Colonic mucosa (tissue), 4 donors: ENCODE measurements at regions of chr4 and their contacts with region 1.

Region 1: GRCh38 chr4:123640271-123640670 is 243.7 kb downstream of the SPRY1 start:
- DNase-seq: no peak
- H3K4me3 ChIP-seq: no peak overlapping the region
- H3K27ac ChIP-seq: no peak overlapping the region
- H3K4me1 ChIP-seq: no peaks in the 10 kb centered on the region
- H3K27me3 ChIP-seq: no peaks in the 10 kb centered on the region
- CTCF ChIP-seq: no peak

Region 2: DNA sequence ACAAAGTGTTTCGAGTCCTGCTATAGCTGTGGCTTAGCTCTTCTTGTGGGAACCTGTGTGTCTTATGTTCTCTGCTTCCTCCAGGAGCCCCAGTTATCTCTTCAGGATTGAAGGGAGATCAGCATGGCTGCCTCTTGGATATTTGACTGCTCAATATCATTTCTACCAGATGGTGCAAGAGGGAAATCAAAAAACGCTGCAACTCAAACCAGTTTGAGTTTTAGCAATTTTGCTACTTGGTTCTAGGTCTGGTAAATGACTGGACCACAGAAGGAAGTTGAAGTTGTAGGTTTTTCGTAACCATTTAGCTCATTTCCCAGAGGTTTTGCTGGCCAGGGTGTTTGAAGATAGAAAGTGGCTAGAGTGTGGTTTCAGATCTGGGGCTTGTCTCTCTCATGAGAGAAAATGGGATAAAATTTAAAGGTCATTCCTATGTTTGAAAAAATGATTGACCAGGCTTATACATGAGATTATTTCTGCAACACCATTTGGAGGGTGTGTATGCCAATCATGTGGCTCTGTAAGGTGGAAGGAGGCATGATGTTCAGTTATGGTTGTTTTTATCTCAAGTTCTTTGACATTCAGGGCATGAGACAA is 33.2 kb before region 1 on chr4:
- intact Hi-C with region 1: loop called (anchors 5 kb)
- DNase-seq: no peak
- H3K4me3 ChIP-seq: no peak overlapping the region
- H3K27ac ChIP-seq: no peak overlapping the region
- H3K4me1 ChIP-seq: no peaks in the 10 kb centered on the region
- H3K27me3 ChIP-seq: no peaks in the 10 kb centered on the region
- CTCF ChIP-seq: no peak